ENCODE measurements at regions of chr2 and their contacts with region 1.

Region 1: DNA sequence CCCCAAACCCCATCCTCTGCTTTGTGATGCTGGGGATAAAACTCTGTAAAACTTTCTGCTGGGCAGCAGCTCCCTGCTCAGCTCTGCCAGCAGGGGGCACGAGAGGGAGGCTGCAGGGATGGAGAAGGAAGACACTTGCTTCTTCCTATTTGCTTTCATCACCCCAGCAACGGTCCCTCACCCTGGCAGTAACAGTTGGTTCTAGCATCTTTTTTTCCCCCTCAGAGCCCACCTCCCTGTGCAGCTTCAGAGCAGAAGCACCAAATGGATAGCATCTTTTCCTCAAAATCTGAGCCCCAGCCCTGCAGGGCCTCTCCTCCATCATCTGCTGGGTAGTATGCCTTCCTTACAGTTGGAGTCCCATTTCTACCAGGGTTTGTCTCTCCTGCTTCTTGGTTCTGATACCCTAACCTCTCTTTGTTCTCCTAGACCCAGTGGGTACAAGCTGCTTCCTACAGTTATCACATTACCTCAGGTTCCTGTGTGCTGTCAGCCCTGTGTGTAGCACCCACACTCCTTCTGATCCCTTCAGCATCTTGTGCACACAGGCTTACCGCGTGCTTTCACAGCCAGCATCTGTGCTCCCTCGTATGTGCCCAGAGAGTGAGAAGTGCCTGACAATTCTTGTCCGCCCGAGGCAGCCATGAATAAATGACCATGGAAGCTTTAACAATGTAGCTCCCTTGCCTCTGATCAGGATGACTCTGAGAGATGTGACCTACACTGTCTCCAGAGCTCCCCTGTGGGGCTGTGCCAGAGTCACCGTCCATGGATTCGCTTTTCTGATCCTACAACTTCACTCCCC is 14.5 kb downstream of the CKAP2L start:
- DNase-seq: peak; percentile 56 to 87 (median 75)
- ATAC-seq: peak; percentile 90 to 96 (median 90)
- H3K4me3 ChIP-seq: no peak overlapping the region
- H3K4me3 Mint-ChIP-seq: peak overlapping the region; percentile 21 to 60 (median 34)
- H3K27ac ChIP-seq: peak overlapping the region; percentile 44
- H3K27ac Mint-ChIP-seq: peak overlapping the region; percentile 4 to 74
- H3K4me1 ChIP-seq: peaks cover 2 to 11% of the 10 kb centered on the region in 2 experiments
- H3K4me1 Mint-ChIP-seq: peaks cover 8 to 23% (median 10%) of the 10 kb centered on the region in 3 donors
- H3K27me3 ChIP-seq: no peaks in the 10 kb centered on the region
- H3K27me3 Mint-ChIP-seq: no peaks in the 10 kb centered on the region

Region 2: DNA sequence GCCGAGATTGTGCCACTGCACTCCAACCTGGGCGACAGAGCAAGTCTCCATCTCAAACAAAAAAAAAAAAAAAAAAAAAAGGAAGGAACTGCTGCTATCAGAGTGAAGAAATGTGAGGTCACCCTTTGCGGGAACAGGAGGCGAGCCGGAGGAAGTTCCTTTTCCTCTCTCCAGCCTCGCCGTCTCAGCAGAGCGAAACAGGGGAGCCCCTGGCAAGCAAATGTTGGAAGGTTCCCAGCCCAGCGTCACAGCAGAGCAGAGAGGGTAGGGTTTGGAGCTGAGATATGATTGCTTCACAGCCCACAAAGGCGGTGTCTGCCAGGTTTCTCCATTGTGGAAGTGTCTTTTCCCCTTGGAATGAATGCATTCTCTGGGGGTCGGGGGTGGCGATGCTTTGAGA is 75.7 kb before region 1 on chr2:
- CTCF ChIA-PET with region 1: interaction called in 1 of 2 experiments, 10 read pairs
- POLR2A ChIA-PET with region 1: no interaction called
- DNase-seq: peak in 1 of 35 experiments; percentile 37
- ATAC-seq: no peak
- H3K4me3 ChIP-seq: no peak overlapping the region
- H3K4me3 Mint-ChIP-seq: no peak overlapping the region
- H3K27ac ChIP-seq: no peak overlapping the region
- H3K27ac Mint-ChIP-seq: no peak overlapping the region
- H3K4me1 ChIP-seq: no peaks in the 10 kb centered on the region
- H3K4me1 Mint-ChIP-seq: peaks cover 0 to 2% (median 0%) of the 10 kb centered on the region in 3 donors
- H3K27me3 ChIP-seq: no peaks in the 10 kb centered on the region
- H3K27me3 Mint-ChIP-seq: peaks cover 3% of the 10 kb centered on the region in 2 donors

Region 3: GRCh38 chr2:112737542-112738232 is 12.3 kb before region 1 on chr2:
- CTCF ChIA-PET with region 1: interaction called, 4 to 13 read pairs
- POLR2A ChIA-PET with region 1: no interaction called
- DNase-seq: no peak
- ATAC-seq: no peak
- H3K4me3 ChIP-seq: no peak overlapping the region
- H3K4me3 Mint-ChIP-seq: no peak overlapping the region
- H3K27ac ChIP-seq: no peak overlapping the region
- H3K27ac Mint-ChIP-seq: no peak overlapping the region
- H3K4me1 ChIP-seq: no peaks in the 10 kb centered on the region
- H3K4me1 Mint-ChIP-seq: no peaks in the 10 kb centered on the region
- H3K27me3 ChIP-seq: no peaks in the 10 kb centered on the region
- H3K27me3 Mint-ChIP-seq: no peaks in the 10 kb centered on the region

Region 4: GRCh38 chr2:112768432-112768831 is 18.5 kb after region 1 on chr2:
- CTCF ChIA-PET with region 1: interaction called in 1 of 2 experiments, 13 read pairs
- POLR2A ChIA-PET with region 1: interaction called in 1 of 2 experiments, 4 read pairs
- DNase-seq: no peak
- ATAC-seq: no peak
- H3K4me3 ChIP-seq: no peak overlapping the region
- H3K4me3 Mint-ChIP-seq: peak overlapping the region in 2 of 3 donors; percentile 25 to 79
- H3K27ac ChIP-seq: peak overlapping the region; percentile 65
- H3K27ac Mint-ChIP-seq: peak overlapping the region; percentile 16 to 95
- H3K4me1 ChIP-seq: peaks cover 9 to 16% of the 10 kb centered on the region in 2 experiments
- H3K4me1 Mint-ChIP-seq: peaks cover 24 to 37% (median 31%) of the 10 kb centered on the region in 3 donors
- H3K27me3 ChIP-seq: no peaks in the 10 kb centered on the region
- H3K27me3 Mint-ChIP-seq: peaks cover 0 to 2% of the 10 kb centered on the region in 2 donors

Region 5: DNA sequence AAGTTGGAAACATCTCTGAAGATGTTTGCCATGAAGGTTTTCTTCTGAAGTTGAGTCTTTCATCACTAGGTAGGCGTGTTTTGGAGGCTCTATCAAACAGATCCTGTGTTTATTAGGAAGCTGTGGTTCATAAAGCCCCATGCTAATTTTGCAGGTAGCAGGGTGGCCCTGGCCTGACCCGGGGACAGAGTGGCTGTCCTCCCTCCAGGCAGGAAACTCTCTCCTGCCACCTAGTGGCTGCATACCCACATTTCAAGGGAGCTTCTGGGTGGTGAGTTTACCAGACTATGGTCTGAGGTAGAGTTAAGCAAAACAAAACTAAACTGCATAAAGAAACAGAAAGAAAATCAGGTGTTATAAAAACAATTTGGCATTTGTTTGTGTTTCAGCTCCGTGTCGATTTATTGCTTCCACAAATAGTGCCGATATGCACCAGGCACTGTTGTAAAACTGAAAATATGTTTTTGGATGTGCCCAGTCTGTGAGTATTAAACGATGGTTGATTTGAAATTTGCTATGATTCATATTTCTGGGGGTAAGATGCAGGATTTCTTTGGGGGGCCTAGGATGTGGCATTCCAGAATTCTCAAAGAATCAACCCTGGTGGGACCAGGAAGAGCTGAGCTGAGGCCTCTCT is 135.0 kb after region 1 on chr2:
- CTCF ChIA-PET with region 1: interaction called, 17 to 38 read pairs
- POLR2A ChIA-PET with region 1: no interaction called
- DNase-seq: peak; percentile 6 to 75 (median 49)
- ATAC-seq: peak; percentile 71 to 84 (median 79)
- H3K4me3 ChIP-seq: no peak overlapping the region
- H3K4me3 Mint-ChIP-seq: no peak overlapping the region
- H3K27ac ChIP-seq: no peak overlapping the region
- H3K27ac Mint-ChIP-seq: peak overlapping the region in 1 of 2 donors; percentile 47
- H3K4me1 ChIP-seq: peaks cover 0 to 6% of the 10 kb centered on the region in 2 experiments
- H3K4me1 Mint-ChIP-seq: peaks cover 6 to 21% (median 13%) of the 10 kb centered on the region in 3 donors
- H3K27me3 ChIP-seq: no peaks in the 10 kb centered on the region
- H3K27me3 Mint-ChIP-seq: no peaks in the 10 kb centered on the region

Region 6: GRCh38 chr2:112941753-112942658 is 192.0 kb after region 1 on chr2:
- CTCF ChIA-PET with region 1: interaction called in 1 of 2 experiments, 67 read pairs
- POLR2A ChIA-PET with region 1: interaction called in 1 of 2 experiments, 3 read pairs
- DNase-seq: peak in 33 of 35 experiments; percentile 11 to 76 (median 42)
- ATAC-seq: peak; percentile 34 to 58 (median 55)
- H3K4me3 ChIP-seq: no peak overlapping the region
- H3K4me3 Mint-ChIP-seq: no peak overlapping the region
- H3K27ac ChIP-seq: no peak overlapping the region
- H3K27ac Mint-ChIP-seq: no peak overlapping the region
- H3K4me1 ChIP-seq: peaks cover 0 to 5% of the 10 kb centered on the region in 2 experiments
- H3K4me1 Mint-ChIP-seq: peaks cover 0 to 2% (median 0%) of the 10 kb centered on the region in 3 donors
- H3K27me3 ChIP-seq: no peaks in the 10 kb centered on the region
- H3K27me3 Mint-ChIP-seq: no peaks in the 10 kb centered on the region

Region 7: DNA sequence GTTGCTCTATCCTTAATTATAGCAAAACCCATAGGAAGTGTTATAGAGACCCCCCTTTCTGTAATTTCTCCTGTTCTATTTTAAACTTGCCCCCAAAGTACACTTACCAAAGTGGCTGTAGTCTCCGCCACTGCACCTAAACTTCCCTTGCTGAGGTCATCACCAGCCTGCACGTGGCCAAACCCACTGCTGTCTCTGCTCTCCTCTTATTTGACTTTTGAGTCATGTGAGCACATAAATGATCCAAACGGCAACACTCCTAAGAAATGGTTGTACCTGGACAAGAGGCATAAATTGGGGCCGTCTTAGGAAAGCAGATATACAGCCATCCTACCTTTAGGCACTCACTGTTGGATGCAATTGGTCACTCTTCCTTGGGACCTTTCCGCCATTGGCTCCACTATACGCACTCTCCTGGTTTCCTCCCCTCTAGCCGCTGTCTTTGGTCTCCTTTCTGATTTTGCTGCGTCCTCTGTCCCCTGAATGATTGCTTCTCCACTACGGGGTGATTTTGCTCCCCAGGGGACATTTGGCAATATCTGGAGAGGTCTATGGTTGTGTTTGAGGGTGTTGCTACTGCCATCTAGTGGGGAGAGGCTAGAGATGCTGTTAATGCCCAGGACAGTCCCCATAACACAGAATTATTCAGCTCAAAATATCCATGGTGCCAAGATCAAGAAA is 208.6 kb after region 1 on chr2:
- CTCF ChIA-PET with region 1: interaction called in 1 of 2 experiments, 11 read pairs
- POLR2A ChIA-PET with region 1: no interaction called
- DNase-seq: peak in 24 of 35 experiments; percentile 4 to 76 (median 14)
- ATAC-seq: peak; percentile 63 to 79 (median 70)
- H3K4me3 ChIP-seq: no peak overlapping the region
- H3K4me3 Mint-ChIP-seq: no peak overlapping the region
- H3K27ac ChIP-seq: no peak overlapping the region
- H3K27ac Mint-ChIP-seq: no peak overlapping the region
- H3K4me1 ChIP-seq: no peaks in the 10 kb centered on the region
- H3K4me1 Mint-ChIP-seq: no peaks in the 10 kb centered on the region
- H3K27me3 ChIP-seq: peaks cover 0 to 11% of the 10 kb centered on the region in 2 experiments
- H3K27me3 Mint-ChIP-seq: peaks cover 0 to 5% of the 10 kb centered on the region in 2 donors

Region 8: DNA sequence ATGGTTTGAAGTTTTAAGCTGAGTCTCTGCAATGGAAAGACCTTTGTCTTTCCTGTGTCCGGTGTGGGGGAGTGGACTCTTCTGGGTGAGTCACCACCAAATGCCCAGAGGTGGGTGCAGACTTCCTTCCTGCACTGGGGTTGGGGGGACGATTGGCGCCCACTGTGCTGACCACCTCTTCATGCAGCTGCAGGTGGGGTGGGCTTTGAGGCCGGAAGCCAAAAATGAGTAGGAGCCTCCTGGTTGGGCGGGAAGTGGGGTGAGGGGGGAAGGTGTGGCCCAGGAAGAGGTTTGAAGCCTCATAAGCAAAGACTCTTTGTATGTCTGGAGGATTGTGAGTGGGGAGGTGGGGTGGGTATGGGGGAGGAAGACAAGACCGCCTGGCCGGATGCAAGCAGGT is 501.2 kb after region 1 on chr2:
- CTCF ChIA-PET with region 1: no interaction called
- POLR2A ChIA-PET with region 1: no interaction called
- DNase-seq: peak in 34 of 35 experiments; percentile 5 to 61 (median 38)
- ATAC-seq: peak; percentile 76 to 89 (median 84)
- H3K4me3 ChIP-seq: no peak overlapping the region
- H3K4me3 Mint-ChIP-seq: peak overlapping the region in 2 of 3 donors; percentile 41 to 79
- H3K27ac ChIP-seq: peak overlapping the region; percentile 70
- H3K27ac Mint-ChIP-seq: peak overlapping the region; percentile 91 to 93
- H3K4me1 ChIP-seq: peaks cover 50 to 53% of the 10 kb centered on the region in 2 experiments
- H3K4me1 Mint-ChIP-seq: peaks cover 68 to 74% (median 70%) of the 10 kb centered on the region in 3 donors
- H3K27me3 ChIP-seq: no peaks in the 10 kb centered on the region
- H3K27me3 Mint-ChIP-seq: no peaks in the 10 kb centered on the region

Measured in T-cell (primary cell).